ENCODE measurements at regions of chr17 and their contacts with region 1.

Region 1: GRCh38 chr17:21043286-21044232 is 748 bp upstream of the USP22 start:
- DNase-seq: peak; percentile 97
- H3K4me3 ChIP-seq: peak overlapping the region; percentile 59 to 78 (median 63)
- H3K27ac ChIP-seq: peak overlapping the region; percentile 55
- H3K4me1 ChIP-seq: peaks cover 20% of the 10 kb centered on the region
- H3K27me3 ChIP-seq: no peaks in the 10 kb centered on the region
- CTCF ChIP-seq: peak; percentile 81 to 91

Region 2: GRCh38 chr17:21007646-21008045 is 35.9 kb before region 1 on chr17:
- CTCF ChIA-PET with region 1: no interaction called
- dilution Hi-C with region 1: no loop called
- in situ Hi-C with region 1: no loop called
- intact Hi-C with region 1: no loop called
- DNase-seq: no peak
- H3K4me3 ChIP-seq: no peak overlapping the region
- H3K27ac ChIP-seq: no peak overlapping the region
- H3K4me1 ChIP-seq: no peaks in the 10 kb centered on the region
- H3K27me3 ChIP-seq: no peaks in the 10 kb centered on the region
- CTCF ChIP-seq: no peak

Region 3: DNA sequence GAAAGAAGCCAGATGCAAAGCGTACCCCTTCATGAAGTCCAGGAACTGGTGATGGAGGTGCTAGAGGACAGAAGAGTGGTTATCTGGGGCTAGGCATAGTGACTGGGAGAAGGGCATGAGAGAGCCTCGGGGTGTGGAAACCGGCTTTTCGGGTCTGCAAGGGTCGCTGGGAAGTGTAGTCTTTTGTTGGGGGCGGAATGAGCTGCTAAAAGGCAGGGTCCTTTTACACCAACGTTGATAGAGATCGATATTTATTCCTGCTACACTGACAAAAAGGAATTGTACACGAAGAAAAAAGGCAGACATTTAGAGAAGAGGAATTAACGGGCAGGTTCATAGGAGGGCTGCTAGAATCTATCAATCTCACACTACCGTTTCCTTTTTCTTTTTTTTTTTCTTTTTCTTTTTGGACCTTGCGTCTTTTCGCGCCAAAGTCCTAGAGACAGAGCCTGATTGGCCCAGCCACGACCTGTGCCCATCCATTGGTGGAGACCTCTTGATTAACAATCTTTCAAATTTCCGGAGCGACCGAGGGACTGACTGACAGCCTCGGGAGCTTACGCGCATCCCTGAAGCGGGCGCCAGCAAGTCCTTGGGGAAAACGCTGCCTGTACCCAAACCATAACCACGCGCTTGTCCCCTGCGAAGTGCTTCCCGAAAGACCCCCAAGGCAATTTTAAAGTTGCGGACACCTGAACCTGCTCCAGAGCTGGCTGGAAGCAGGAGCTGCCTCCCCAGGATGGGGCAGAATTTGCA is 55.6 kb after region 1 on chr17:
- CTCF ChIA-PET with region 1: interaction called, 11 read pairs
- dilution Hi-C with region 1: no loop called
- in situ Hi-C with region 1: no loop called
- intact Hi-C with region 1: loop called (anchors 1 kb)
- DNase-seq: peak; percentile 87
- H3K4me3 ChIP-seq: peak overlapping the region; percentile 53 to 65 (median 64)
- H3K27ac ChIP-seq: peak overlapping the region; percentile 84
- H3K4me1 ChIP-seq: no peaks in the 10 kb centered on the region
- H3K27me3 ChIP-seq: no peaks in the 10 kb centered on the region
- CTCF ChIP-seq: no peak

Region 4: DNA sequence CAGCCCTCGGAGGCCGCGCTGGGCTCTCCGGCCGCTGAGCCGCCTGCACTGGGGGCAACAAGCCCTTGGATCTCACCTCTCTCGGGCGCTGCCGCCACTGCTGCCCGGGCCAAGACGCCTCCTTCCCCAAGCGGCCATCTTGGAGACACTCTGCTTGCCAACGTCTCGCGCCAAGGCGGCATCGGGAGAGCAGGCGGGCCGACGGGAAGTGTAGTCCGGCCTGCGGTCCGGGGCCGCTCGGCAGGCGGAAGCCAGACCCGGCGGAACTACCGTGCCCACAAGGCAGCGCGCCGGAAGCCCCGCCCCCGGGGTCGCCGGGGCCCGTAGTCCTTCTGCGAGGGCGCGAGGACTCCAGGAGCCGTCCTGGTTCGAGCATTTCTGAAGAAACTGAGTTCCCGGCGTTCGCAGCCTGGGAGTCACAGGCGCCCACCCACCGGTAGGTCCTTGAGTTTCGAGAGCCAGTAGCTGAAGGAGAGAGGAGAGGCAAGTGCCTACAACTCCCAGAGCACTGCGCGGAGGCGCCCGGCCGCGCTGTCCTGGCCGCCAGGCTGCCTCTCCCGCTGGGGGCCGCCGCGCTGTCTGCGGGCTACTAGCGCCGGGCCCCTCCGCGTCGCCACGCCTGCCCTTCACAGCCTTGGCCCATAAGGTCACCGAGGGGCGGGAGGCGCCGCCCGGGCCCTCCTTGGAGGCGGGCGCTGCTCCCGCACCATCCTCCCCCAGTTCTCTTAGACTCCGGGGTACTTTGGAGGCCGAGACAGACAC is 170.6 kb after region 1 on chr17 and contains the start of gene TMEM11:
- CTCF ChIA-PET with region 1: no interaction called
- dilution Hi-C with region 1: no loop called
- in situ Hi-C with region 1: no loop called
- intact Hi-C with region 1: loop called (anchors 5 kb)
- DNase-seq: peak; percentile 95
- H3K4me3 ChIP-seq: peak within 1 kb of the TSS; percentile 78 to 96 (median 93)
- H3K27ac ChIP-seq: peak within 1 kb of the TSS; percentile 86
- H3K4me1 ChIP-seq: peaks cover 33% of the 10 kb centered on the region
- H3K27me3 ChIP-seq: no peaks in the 10 kb centered on the region
- CTCF ChIP-seq: peak in 1 of 2 donors; percentile 18
- total RNA-seq, gene TMEM11: 17.2 to 35.7 TPM

Region 5: DNA sequence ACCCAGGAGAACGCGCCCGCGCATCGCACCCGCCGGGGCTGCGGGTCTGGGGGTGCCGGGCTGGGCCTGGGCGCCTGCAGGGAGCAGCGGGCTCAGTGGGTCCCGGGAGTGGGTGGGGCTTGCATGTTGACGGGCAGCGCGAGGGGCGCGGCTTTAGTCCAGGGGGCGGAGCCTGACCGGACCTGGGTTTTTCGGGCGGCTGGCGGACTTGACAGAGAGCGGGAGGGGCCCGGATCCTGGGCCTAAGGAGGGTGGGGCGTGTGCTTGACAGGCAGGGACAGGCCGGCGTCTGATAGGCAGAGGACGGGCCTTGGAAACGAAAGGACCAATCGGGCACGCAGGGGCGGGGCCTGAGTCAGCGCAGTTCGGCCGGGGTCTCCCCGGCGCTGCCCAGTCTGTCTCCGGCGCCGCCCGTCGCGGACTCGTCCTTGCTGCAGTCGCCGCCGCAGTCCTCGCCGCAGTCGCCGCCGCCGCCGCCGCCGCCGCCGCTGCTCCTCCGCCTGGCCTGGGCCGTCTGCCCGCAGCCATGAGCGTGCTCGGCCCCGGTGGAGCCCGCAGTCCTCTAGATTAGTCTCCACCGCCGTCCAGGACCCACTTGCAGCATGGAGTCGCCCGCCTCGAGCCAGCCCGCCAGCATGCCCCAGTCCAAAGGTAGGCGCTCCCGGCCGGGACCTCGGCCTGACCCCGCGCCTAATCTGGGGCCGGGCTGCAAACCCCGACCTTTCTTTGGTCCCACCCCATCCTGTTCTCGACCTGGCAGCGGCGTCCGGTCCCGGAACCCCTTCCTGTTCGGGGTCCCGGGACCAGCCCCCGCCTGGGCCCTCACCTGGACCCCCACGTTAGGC is 241.0 kb after region 1 on chr17 and contains the start of gene MAP2K3:
- CTCF ChIA-PET with region 1: no interaction called
- dilution Hi-C with region 1: no loop called
- in situ Hi-C with region 1: no loop called
- intact Hi-C with region 1: loop called (anchors 2 kb)
- DNase-seq: peak; percentile 97
- H3K4me3 ChIP-seq: peak within 1 kb of the TSS; percentile 71 to 87 (median 76)
- H3K27ac ChIP-seq: peak within 1 kb of the TSS; percentile 97
- H3K4me1 ChIP-seq: peaks cover 45% of the 10 kb centered on the region
- H3K27me3 ChIP-seq: no peaks in the 10 kb centered on the region
- CTCF ChIP-seq: no peak
- total RNA-seq, gene MAP2K3: 14.2 to 57.6 TPM

Measured in mammary epithelial cell (primary cell).